ENCODE measurements at regions of chr18 and their contacts with region 1.

Region 1: DNA sequence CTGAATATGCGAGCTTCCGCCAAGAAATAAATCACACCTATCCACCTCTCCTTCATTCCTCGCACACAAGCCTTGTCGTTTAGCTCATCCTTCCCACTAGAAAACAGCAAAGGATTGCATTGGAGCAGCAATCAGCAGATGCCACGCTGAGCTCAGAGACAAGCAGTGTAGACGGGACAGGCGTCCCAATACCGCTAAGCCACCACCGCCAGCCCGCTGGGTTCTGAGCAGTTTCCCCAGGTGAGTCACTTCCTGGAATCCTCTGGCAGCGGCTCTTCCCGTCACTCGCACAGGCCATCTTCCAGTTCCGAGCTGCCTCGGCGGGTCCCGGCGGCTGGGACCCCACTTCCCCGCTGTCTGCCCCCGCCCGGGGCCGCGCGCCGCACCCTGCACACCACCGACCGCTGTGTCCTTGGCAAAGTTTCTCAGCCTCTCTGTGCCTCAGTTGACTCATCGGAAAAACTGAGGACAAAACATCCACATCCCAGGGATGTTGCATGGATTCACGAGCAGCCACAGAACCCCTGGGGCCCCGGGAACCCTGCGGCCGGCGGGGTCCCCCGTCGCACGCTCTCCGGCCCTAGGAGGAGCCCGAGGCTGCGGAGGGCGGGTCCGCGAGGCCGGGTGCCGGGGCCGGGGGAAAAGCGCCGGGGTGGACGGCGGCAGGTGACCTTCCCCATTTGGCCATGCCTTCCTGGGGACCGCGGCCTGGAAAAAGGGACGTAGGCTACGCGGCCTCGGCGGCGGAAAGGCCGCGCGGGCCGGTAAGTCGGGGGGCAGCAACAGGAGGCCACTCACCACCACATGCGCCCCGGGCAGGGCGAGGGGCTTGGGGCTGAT is 573 bp downstream of the KDSR start:
- DNase-seq: peak; percentile 57
- ATAC-seq: peak; percentile 43
- H3K4me3 Mint-ChIP-seq: peak overlapping the region; percentile 93
- H3K27ac Mint-ChIP-seq: peak overlapping the region; percentile 85
- H3K4me1 Mint-ChIP-seq: peaks cover 17% of the 10 kb centered on the region
- H3K27me3 Mint-ChIP-seq: no peaks in the 10 kb centered on the region
- CTCF ChIP-seq: no peak

Region 2: DNA sequence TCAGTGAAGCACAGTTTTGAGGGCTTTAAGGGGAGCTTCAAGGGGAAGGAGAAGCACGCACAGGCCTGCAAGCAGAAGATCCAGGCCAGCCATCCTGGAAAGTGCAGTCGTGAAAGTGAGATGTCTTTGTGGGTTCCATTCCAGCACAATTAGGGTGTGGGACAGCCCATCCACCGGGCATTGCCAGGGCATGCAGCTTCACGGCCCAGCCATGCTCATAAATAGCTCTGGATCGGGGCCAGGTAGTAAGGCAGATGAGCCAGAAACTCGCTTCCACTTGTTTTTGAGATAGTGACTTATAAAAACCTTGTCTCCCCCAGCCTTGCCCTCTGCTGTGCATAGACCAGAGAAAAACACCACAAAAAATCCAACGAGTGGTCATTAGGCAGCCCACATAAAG is 20.4 kb before region 1 on chr18:
- CTCF ChIA-PET with region 1: no interaction called
- POLR2A ChIA-PET with region 1: no interaction called
- DNase-seq: no peak
- ATAC-seq: no peak
- H3K4me3 Mint-ChIP-seq: no peak overlapping the region
- H3K27ac Mint-ChIP-seq: no peak overlapping the region
- H3K4me1 Mint-ChIP-seq: peaks cover 4% of the 10 kb centered on the region
- H3K27me3 Mint-ChIP-seq: no peaks in the 10 kb centered on the region
- CTCF ChIP-seq: no peak

Region 3: DNA sequence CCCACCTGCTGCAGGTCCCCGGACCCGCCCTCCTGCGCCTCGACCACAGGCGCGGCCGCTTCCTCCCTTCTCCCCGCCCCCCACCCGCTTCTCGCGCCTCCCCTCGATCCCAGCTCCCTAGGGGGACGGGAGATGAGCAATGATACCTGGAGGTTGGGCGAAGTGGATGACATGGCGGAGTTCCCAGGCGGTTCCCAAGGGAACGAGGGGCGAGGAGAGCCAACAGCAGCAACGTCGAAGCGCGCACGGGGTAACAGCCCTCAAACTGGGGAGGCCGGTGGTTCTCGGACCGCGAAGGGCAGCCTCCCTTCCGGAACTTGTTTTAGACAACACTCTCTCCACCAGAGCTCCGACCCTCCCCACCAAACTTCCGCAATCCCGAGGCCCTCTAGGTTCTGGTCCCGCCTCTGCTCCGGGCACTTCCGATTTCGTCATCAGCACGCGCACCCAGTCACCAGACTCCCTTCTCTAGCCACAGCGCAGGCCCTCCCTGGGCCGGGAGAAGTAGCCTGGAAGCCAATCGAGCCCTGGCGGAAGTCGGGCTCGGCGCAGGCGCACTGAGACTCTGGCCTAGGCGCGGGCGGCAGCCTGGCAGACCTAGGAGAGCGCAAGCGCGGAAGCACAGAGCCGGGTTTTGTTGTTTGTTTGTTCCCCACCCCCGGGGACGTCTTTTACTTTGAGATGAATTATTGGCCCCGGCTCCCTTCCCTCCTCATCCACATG is 55.8 kb after region 1 on chr18 and contains the start of gene VPS4B:
- CTCF ChIA-PET with region 1: interaction called, 3 read pairs
- POLR2A ChIA-PET with region 1: interaction called, 11 read pairs
- DNase-seq: peak; percentile 99
- ATAC-seq: peak; percentile 98
- H3K4me3 Mint-ChIP-seq: peak within 1 kb of the TSS; percentile 99
- H3K27ac Mint-ChIP-seq: peak within 1 kb of the TSS; percentile 99
- H3K4me1 Mint-ChIP-seq: peaks cover 19% of the 10 kb centered on the region
- H3K27me3 Mint-ChIP-seq: no peaks in the 10 kb centered on the region; the same call in 1 of the 2 replicates
- CTCF ChIP-seq: no peak
- total RNA-seq, gene VPS4B: 37.8 to 44.1 TPM (median 42.8 TPM) in 3 replicates

Region 4: GRCh38 chr18:63783394-63783793 is 417.0 kb after region 1 on chr18:
- CTCF ChIA-PET with region 1: no interaction called
- POLR2A ChIA-PET with region 1: no interaction called
- DNase-seq: peak; percentile 27
- ATAC-seq: peak; percentile 98
- H3K4me3 Mint-ChIP-seq: no peak overlapping the region
- H3K27ac Mint-ChIP-seq: no peak overlapping the region
- H3K4me1 Mint-ChIP-seq: no peaks in the 10 kb centered on the region
- H3K27me3 Mint-ChIP-seq: no peaks in the 10 kb centered on the region
- CTCF ChIP-seq: no peak